ENCODE measurements at regions of chr12 and their contacts with region 1.

Region 1: DNA sequence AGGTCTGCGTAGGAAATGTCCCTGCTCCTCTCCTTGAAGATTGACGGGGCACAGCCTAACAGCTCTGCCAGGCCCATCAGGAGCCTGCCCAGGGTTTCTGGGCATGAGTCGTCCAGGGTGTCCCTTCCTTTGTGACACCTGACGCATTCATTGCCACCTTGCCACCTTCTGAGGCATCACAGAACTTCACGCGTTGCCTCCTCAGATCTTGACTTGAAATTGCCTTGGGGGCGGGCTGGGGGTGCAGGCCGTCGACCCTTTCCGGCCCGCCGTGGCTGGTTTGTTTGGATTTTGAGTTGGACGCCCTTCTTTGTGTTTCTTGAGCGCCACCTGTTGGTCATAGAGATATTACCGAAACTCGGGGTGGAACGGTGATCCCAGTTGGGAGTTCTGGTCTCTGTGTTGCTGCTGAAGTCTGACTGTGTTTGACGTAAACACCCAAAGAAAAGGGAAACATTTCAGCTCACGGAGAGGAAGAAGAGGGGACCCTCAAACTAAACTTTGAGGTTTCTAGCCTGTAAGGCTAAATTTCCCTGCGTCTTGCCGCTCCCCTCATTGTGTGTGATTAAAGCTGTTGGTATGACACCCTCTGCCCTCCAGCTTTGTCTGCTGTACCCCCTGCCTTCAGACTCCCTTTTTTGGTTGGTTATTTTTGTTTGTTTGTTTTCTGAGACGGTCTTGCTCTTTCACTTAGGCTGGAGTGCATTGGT is 44.6 kb downstream of the MLXIP start:
- DNase-seq: peak; percentile 76

Region 2: DNA sequence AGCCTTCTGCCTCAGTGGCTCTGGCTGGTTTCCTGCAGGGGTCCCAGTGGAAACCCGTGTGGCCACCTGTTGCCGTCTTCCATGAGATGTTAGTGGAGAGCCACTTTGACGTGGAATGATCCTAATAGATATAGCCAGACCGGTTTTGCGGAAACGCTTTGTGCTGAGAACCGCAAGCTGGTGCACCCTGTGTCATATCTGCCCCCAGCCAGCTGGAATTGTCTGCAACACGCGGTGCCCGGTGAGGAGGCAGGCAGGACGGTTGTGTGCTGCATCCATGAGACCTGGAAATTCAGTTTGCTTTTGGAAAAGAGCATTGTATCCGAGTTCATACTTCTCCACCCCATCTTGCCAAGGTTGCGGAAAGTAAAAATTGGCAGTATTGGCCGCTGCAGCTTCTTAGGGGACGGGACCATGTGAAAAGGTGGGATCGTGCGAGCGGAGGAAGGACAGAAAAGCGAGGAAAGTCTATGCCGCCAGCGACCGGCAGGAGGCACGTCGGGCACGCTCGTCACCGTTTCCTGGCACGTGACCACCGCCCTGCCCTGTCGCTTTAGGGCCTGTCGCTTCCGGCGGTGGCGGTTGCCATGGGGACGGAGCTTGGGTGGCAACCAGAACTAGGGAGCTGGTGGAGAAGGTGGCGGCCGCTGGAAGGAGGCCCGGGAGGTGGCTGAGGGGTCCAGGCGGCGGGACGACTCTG is 205.1 kb before region 1 on chr12 and contains the start of gene CFAP251:
- intact Hi-C with region 1: loop called (anchors 2 kb)
- DNase-seq: peak; percentile 98
- total RNA-seq, gene CFAP251: 3.8 TPM

Region 3: GRCh38 chr12:122051231-122051876 is 71.9 kb before region 1 on chr12:
- intact Hi-C with region 1: loop called (anchors 1 kb)
- DNase-seq: peak; percentile 88

Region 4: DNA sequence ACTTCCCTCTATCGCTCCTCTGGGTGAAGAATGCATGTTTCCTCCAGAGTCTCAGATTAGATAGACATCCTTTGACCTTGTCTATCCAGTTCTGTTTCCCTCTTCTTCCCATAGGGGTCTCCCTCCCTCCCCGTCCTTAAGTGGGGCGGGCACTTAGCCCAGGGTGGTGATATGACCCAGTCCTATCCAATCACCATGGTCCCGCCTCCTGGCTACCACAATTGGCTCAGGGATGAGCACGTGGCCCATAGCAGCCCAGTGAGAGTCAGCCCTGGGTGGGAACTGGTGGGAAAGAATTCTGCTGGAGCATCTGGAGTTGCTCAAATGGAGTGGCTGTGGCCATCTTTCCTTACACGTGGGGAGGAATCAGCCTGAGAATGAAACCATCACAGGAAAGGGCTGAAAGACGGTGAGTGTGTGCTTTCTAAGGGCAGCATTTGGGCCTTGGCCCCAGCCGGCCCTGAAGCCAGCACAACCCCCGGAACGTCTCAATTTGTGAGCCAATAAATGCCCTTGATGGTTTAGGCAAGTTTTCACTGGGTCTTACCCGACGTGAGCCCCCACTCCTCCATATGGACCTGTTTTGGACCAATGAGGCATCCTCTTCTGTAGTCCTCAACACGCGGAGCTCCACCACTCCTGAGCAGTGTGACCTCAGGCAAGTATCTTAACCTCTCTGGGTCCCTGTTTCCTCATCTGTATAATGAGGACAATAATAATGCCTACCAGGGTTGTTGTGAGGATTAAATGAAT is 59.0 kb before region 1 on chr12:
- intact Hi-C with region 1: no loop called
- DNase-seq: peak; percentile 89

Region 5: DNA sequence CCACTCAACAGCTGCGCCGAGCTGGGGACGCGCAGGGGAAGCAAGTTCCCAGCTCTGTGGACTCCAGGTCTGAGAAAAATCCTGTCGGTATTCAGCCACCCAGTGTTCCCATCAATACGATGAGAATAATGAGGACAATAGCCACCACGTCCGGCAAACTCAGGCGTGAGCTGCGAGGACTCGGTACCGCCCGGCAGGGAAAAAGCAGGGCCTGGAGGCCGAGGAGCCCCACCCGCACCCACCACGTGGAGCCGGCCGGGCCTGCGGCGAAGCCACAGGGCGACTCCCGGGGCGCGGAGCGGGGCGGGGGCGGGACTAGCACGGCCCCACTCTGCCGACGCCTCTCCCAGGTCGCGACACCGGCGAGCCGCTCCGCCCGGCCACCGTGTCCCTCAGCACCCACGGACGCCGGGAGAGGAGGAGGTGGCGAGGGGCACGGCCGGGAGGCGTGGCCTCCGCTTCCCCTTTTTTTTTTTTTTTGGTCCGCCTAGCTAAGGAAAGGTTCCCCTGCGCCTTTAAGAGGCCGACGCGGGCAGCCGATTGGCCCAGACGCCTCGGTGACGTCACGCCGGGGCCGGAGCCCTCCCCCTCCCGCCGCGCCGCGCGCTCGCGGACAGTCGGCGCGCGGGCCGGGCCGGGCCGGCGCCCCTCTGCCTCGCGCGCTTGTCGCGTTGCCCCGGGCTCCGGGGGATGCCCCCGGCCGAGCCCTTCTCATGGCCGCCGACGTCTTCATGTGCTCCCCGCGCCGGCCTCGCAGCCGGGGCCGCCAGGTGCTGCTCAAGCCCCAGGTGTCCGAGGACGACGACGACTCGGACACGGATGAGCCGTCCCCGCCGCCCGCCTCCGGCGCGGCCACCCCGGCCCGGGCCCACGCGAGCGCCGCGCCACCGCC is 44.8 kb before region 1 on chr12 and contains the start of gene MLXIP:
- intact Hi-C with region 1: loop called (anchors 1 kb)
- DNase-seq: peak; percentile 97
- total RNA-seq, gene MLXIP: 24.7 TPM

Region 6: DNA sequence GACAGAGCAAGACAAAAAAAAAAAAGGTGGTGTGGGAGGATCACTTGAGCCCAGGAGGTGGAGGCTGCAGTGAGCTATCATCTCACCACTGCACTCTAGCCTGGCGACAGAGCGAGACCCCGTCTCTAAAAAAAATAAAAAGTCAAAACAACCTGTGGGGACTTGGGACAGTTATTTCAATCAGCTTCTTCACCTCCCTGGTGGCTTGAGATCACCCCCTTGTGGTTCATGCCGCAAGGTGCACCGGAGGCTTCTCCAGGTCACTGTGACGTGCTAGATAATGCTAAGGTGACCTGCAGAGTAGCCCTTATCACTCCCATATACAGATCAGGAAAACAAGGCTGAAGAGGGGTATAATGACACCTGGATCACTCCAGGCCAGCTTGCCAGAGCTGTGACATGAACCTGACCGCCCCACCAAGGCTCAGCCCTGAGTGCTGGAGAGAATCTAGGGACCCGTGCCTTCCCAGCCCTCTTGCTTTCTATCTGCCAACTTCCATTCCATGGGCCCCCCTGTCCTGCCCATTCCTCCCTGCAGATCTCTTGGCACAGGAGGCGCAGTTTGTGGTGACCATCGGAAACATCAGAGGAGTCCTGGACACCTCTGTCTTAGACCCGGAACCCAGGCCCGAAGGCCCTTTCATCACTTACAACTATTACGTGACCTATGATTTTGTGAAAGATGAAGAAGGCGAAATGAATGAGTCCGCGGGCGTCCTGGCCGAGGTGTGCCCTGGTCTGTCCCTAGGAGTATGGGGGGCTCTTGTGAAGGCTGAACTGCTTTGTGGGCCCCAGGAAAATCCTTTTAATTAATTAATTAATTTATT is 67.8 kb after region 1 on chr12:
- intact Hi-C with region 1: loop called (anchors 5 kb)
- DNase-seq: peak; percentile 22

Measured in cardiac septum (tissue), 1 donor.